ENCODE measurements at regions of chr5 and their contacts with region 1.

Region 1: DNA sequence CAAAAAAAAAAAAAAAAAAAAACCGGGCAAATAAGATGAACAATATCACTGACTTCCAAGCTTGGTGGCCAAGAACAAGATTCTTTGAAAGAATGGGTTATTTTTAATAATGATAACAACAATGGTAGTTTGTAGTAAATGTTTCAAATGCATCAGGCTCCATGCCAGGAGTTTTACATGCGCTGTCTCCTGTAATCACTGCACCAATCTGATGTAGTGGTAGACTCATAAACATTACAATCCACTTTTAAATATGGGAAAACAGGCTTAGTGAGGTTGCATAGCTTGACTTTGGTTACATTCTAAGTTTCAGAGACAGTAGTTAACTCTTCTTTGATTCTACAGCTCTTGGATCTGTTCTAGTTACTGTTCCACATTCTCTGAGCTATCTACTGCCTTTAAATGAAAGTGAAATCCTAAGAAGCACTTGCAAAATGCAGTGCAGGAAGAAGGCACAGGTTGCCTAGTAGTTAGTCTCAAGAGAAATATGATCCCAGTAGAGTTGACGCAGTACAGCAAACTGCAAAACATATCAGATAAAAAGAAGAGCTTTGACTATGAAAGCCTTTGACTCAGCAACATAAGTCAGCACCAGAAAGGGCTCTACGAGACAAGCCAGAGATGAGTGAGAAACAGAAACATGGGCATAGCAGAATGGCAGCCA is 62.1 kb downstream of the PDE4D start:
- DNase-seq: no peak
- H3K4me3 ChIP-seq: no peak overlapping the region
- H3K27ac ChIP-seq: no peak overlapping the region
- H3K4me1 ChIP-seq: peaks cover 0 to 31% (median 4%) of the 10 kb centered on the region in 4 donors
- H3K27me3 ChIP-seq: no peaks in the 10 kb centered on the region
- CTCF ChIP-seq: no peak

Region 2: GRCh38 chr5:59483971-59484472 is 347.4 kb before region 1 on chr5:
- intact Hi-C with region 1: no loop called
- DNase-seq: no peak
- H3K4me3 ChIP-seq: no peak overlapping the region
- H3K27ac ChIP-seq: no peak overlapping the region
- H3K4me1 ChIP-seq: peaks cover 0 to 35% (median 0%) of the 10 kb centered on the region in 4 donors
- H3K27me3 ChIP-seq: no peaks in the 10 kb centered on the region
- CTCF ChIP-seq: no peak

Region 3: DNA sequence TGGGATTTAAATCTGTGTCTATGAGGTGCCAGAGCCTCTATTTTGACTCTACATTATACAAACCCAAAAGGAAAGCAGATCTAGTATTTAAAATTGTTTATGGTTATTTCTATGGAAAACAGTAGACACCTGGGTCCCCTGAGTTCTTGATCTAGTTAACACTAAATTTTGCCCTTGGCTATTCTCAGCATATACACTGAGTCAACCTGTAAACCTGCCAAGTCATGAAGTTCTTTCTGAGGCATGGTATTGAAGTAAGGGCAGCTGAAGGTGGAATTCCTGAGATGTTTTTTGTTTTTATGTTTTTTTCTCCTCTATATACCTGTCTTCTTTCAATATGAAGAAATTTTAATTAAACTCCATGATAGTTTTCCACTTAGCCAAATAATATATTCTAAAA is 58.2 kb before region 1 on chr5:
- intact Hi-C with region 1: no loop called
- DNase-seq: no peak
- H3K4me3 ChIP-seq: no peak overlapping the region
- H3K27ac ChIP-seq: no peak overlapping the region
- H3K4me1 ChIP-seq: peaks cover 0 to 25% (median 4%) of the 10 kb centered on the region in 4 donors
- H3K27me3 ChIP-seq: no peaks in the 10 kb centered on the region
- CTCF ChIP-seq: no peak

Region 4: DNA sequence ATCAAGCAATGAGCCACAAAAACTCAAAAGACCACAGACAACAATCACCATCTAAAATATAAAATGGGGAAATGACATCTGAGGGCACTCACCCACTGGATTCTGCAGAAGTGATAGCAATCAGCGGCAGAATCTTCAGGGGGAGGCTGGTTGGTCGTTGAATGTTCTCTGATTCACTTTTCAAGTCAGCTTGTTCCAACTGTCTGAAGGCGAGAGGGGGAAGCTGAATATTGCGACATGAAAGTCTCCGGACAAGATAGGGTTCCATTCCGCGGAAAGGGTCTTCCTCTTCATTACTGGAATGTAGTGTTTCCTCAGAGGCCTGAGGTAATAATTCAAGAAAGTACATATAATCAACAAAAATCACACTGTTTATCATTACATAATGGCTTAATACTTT is 156.9 kb after region 1 on chr5:
- intact Hi-C with region 1: loop called (anchors 10 kb)
- DNase-seq: no peak
- H3K4me3 ChIP-seq: no peak overlapping the region
- H3K27ac ChIP-seq: no peak overlapping the region
- H3K4me1 ChIP-seq: no peaks in the 10 kb centered on the region
- H3K27me3 ChIP-seq: no peaks in the 10 kb centered on the region
- CTCF ChIP-seq: no peak

Measured in tibial artery (tissue), 4 donors.